Ascending aorta (tissue), 2 donors: ENCODE measurements at regions of chr1 and their contacts with region 1.

Region 1: GRCh38 chr1:33430692-33431593 is at the start of gene PHC2:
- DNase-seq: peak; percentile 96 to 99
- H3K4me3 ChIP-seq: peak within 1 kb of the TSS; percentile 84 to 94
- H3K27ac ChIP-seq: peak within 1 kb of the TSS; percentile 45 to 51
- H3K4me1 ChIP-seq: no peaks in the 10 kb centered on the region
- H3K27me3 ChIP-seq: no peaks in the 10 kb centered on the region
- CTCF ChIP-seq: peak in 2 of 3 experiments; percentile 37 to 51
- total RNA-seq, gene PHC2: 222 TPM

Region 2: GRCh38 chr1:33349778-33350610 is 80.9 kb before region 1 on chr1:
- intact Hi-C with region 1: loop called (anchors 2 kb)
- DNase-seq: peak in 1 of 2 donors; percentile 93
- H3K4me3 ChIP-seq: peak overlapping the region; percentile 71 to 99
- H3K27ac ChIP-seq: peak overlapping the region; percentile 81 to 85
- H3K4me1 ChIP-seq: peaks cover 6 to 23% of the 10 kb centered on the region in 2 donors
- H3K27me3 ChIP-seq: no peaks in the 10 kb centered on the region
- CTCF ChIP-seq: no peak

Region 3: DNA sequence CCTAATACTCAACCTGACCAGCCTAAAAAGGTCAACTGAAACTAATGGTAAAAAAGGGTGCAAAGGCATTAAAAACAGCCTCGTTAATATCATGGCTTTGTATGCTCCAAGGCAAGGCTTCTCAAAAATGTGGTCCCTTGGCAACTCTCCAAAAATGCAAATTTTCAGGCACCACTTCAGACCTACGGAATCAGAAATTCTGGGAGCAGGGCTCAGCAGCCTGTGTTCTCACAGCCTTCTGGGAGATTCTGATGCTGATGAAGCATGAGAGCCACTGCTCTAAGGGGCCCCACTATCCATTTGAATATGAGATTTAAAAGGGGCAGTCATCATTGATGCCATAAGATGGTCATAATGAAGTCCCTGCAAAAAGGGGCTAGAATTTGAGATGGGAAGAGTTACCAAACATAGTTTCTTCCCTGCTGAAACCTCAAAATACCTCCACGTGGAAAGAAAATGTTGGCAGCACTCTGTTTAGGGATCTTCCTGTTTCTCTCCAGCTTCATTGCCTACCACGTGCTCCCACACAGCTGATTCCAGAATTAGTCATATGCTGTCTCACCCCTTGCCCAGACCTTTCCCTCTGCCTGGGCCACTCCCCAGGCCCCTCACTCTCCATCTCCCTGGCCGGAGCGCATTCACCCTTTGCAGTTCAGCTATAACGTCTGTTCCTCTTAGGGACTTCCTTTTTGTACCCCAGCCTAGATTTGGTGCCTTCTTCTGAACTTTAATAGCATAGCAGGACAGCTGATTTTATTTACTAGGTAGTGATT is 46.7 kb before region 1 on chr1:
- intact Hi-C with region 1: loop called (anchors 5 kb)
- DNase-seq: peak in 1 of 2 donors; percentile 60
- H3K4me3 ChIP-seq: no peak overlapping the region
- H3K27ac ChIP-seq: no peak overlapping the region
- H3K4me1 ChIP-seq: peaks cover 0 to 6% of the 10 kb centered on the region in 2 donors
- H3K27me3 ChIP-seq: no peaks in the 10 kb centered on the region
- CTCF ChIP-seq: no peak

Region 4: GRCh38 chr1:33410091-33410701 is 20.7 kb before region 1 on chr1:
- intact Hi-C with region 1: loop called (anchors 1 kb)
- DNase-seq: peak; percentile 11 to 90
- H3K4me3 ChIP-seq: no peak overlapping the region
- H3K27ac ChIP-seq: peak overlapping the region; percentile 56 to 84
- H3K4me1 ChIP-seq: peaks cover 3 to 9% of the 10 kb centered on the region in 2 donors
- H3K27me3 ChIP-seq: no peaks in the 10 kb centered on the region
- CTCF ChIP-seq: no peak